ENCODE measurements at regions of chr1 and their contacts with region 1.

Region 1: DNA sequence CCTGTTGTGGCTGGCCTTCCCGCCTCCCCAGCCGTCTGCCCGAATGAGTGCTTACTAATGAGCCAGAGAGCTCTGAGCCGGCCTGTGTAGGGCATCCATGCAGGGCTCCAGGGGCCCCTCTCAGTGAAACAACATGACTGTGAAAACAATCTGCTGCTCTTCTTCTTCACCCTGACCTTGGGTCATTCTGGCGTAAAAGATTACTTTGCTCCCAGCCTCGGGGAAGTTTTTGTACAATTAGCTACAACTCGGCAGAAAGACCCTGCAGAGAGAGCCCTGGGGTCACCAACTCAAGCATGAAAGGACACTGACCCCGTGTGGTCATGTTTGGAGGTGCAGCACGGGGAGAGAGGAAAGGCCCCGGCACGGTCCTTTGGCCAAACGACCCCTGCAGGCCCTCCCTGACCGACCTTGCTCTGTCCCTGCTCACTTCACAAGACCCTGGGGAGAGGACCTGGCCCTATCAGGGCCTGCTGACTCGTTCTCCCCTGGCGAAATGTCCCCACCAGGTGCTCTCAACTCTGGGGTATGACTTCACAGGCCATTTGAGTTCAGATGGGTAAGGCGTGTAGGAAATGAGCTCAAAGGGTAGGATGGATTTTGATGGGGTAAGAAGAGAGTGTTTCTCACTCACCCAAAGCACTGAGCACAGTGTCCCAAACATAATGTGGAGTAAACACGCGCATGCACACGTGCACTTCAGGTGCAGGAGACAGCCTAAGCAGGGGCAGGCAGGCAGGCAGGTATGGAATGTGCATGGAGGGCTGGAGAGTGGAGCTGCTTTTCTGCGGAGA is 22.9 kb upstream of the FAM20B start:
- DNase-seq: peak; percentile 94
- H3K4me3 ChIP-seq: peak overlapping the region in 3 of 4 donors; percentile 14 to 38 (median 28)
- H3K27ac ChIP-seq: no peak overlapping the region
- H3K4me1 ChIP-seq: peaks cover 7 to 21% (median 12%) of the 10 kb centered on the region in 4 donors
- H3K27me3 ChIP-seq: no peaks in the 10 kb centered on the region
- CTCF ChIP-seq: peak in 2 of 3 experiments; percentile 97 to 98
- EP300 ChIP-seq: no peak
- POLR2A ChIP-seq: no peak

Region 2: GRCh38 chr1:178532392-178532791 is 470.4 kb before region 1 on chr1:
- intact Hi-C with region 1: loop called (anchors 5 kb)
- DNase-seq: no peak
- H3K4me3 ChIP-seq: no peak overlapping the region
- H3K27ac ChIP-seq: no peak overlapping the region
- H3K4me1 ChIP-seq: peaks cover 9 to 18% (median 13%) of the 10 kb centered on the region in 4 donors
- H3K27me3 ChIP-seq: no peaks in the 10 kb centered on the region
- CTCF ChIP-seq: peak; percentile 78 to 89 (median 87)
- EP300 ChIP-seq: no peak
- POLR2A ChIP-seq: no peak

Region 3: GRCh38 chr1:178609015-178609414 is 393.7 kb before region 1 on chr1:
- intact Hi-C with region 1: no loop called
- DNase-seq: no peak
- H3K4me3 ChIP-seq: no peak overlapping the region
- H3K27ac ChIP-seq: peak overlapping the region in 2 of 4 donors; percentile 17 to 50
- H3K4me1 ChIP-seq: peaks cover 2 to 9% (median 5%) of the 10 kb centered on the region in 4 donors
- H3K27me3 ChIP-seq: no peaks in the 10 kb centered on the region
- CTCF ChIP-seq: no peak
- EP300 ChIP-seq: no peak
- POLR2A ChIP-seq: no peak

Region 4: GRCh38 chr1:178774263-178774662 is 228.5 kb before region 1 on chr1:
- intact Hi-C with region 1: loop called (anchors 2 kb)
- DNase-seq: no peak
- H3K4me3 ChIP-seq: no peak overlapping the region
- H3K27ac ChIP-seq: no peak overlapping the region
- H3K4me1 ChIP-seq: no peaks in the 10 kb centered on the region
- H3K27me3 ChIP-seq: no peaks in the 10 kb centered on the region
- CTCF ChIP-seq: peak in 2 of 3 experiments; percentile 43 to 46
- EP300 ChIP-seq: no peak
- POLR2A ChIP-seq: no peak

Region 5: GRCh38 chr1:178808529-178808928 is 194.2 kb before region 1 on chr1:
- intact Hi-C with region 1: loop called (anchors 1 kb)
- DNase-seq: no peak
- H3K4me3 ChIP-seq: no peak overlapping the region
- H3K27ac ChIP-seq: no peak overlapping the region
- H3K4me1 ChIP-seq: peaks cover 0 to 9% (median 0%) of the 10 kb centered on the region in 4 donors
- H3K27me3 ChIP-seq: no peaks in the 10 kb centered on the region
- CTCF ChIP-seq: no peak
- EP300 ChIP-seq: no peak
- POLR2A ChIP-seq: no peak